Activated CD4-positive, alpha-beta T cell treated with anti-CD3 and anti-CD28 coated beads for 36 hours (primary cell): ENCODE measurements at regions of chr11 and their contacts with region 1.

Region 1: GRCh38 chr11:126080161-126080941 is 17.7 kb upstream of the CDON start:
- DNase-seq: no peak
- ATAC-seq: no peak
- H3K4me3 Mint-ChIP-seq: no peak overlapping the region
- H3K27ac Mint-ChIP-seq: no peak overlapping the region
- H3K4me1 Mint-ChIP-seq: peaks cover 24% of the 10 kb centered on the region
- H3K27me3 Mint-ChIP-seq: no peaks in the 10 kb centered on the region

Region 2: DNA sequence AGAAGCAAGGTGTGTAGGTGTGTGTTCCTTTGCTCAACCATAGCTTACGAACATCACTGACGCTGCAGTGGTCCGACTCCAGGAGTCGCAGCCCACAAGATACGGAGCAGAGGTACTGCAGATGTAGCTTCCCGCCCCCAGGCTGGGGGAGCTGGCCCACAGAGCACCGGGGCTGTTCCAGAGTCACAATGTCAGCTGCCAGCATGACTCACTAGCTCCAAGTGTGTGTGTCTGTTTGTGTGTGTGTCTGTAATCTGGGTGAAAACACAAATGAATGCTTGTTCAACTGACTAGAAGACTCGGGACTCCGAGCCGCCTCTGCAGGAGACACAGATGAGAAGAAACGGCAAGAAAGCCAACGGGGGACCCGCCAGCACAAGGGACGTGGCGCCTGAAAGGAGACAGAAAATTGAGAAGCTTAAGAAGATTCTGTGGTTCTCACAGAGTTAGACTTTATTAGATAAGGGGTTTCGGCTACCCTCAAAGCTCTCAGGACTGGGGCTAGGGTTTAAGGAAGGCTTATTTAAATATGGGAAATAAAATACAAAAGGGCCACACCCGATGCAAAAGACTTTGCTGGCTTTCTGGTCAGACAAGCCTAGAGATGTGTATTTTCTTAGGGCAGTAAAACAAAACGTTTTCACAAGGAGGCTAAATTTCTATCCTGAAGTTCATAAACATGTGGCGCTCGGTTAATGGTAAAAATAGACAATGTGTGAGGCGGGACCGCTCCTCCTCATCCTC is 123.8 kb before region 1 on chr11:
- CTCF ChIA-PET with region 1: no interaction called
- POLR2A ChIA-PET with region 1: no interaction called
- intact Hi-C with region 1: no loop called
- DNase-seq: no peak
- ATAC-seq: no peak
- H3K4me3 Mint-ChIP-seq: no peak overlapping the region
- H3K27ac Mint-ChIP-seq: no peak overlapping the region
- H3K4me1 Mint-ChIP-seq: peaks cover 6% of the 10 kb centered on the region
- H3K27me3 Mint-ChIP-seq: no peaks in the 10 kb centered on the region

Region 3: DNA sequence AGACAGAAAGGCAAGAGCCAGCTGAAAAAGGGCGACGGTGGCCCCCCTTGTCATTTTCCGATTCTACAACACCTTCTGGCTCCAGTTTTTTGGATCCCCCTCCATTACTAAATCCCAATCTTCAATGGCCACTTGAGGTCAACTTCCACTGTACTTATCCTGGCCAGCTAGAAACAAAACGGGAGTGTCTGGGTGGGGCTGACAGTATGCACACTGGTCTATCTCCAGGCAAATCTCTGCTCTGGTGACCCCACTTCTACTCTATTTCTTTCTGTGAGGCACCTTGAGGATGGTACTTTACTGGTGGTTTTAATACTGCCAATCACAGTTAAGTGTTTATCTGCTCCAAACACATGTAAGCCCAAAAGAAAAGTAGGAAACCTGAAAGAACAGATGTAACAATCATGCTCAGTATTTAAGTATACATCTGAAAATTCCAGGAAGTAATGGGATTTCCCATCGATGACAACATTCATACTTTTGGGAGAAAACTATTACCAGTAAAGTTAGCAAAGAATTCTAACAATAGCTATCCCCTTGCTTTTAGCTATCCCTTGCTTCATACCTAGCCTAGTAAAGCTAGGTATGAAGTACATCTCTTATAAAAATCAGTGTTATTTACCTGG is 33.7 kb before region 1 on chr11:
- CTCF ChIA-PET with region 1: no interaction called
- POLR2A ChIA-PET with region 1: no interaction called
- intact Hi-C with region 1: loop called in 1 of 2 experiments (anchors 1 kb)
- DNase-seq: no peak
- ATAC-seq: no peak
- H3K4me3 Mint-ChIP-seq: no peak overlapping the region
- H3K27ac Mint-ChIP-seq: no peak overlapping the region
- H3K4me1 Mint-ChIP-seq: peaks cover 10% of the 10 kb centered on the region
- H3K27me3 Mint-ChIP-seq: no peaks in the 10 kb centered on the region